ENCODE measurements at regions of chr17 and their contacts with region 1.

Region 1: GRCh38 chr17:30716461-30717300 is 107.8 kb downstream of the CRLF3 start:
- DNase-seq: peak in 1 of 5 donors; percentile 27
- H3K4me3 ChIP-seq: no peak overlapping the region
- H3K4me3 Mint-ChIP-seq: no peak overlapping the region
- H3K27ac ChIP-seq: no peak overlapping the region
- H3K27ac Mint-ChIP-seq: peak overlapping the region in 1 of 7 donors; percentile 27
- H3K4me1 ChIP-seq: no peaks in the 10 kb centered on the region
- H3K4me1 Mint-ChIP-seq: peaks cover 5 to 11% (median 6%) of the 10 kb centered on the region in 4 donors
- H3K27me3 ChIP-seq: no peaks in the 10 kb centered on the region
- H3K27me3 Mint-ChIP-seq: no peaks in the 10 kb centered on the region

Region 2: DNA sequence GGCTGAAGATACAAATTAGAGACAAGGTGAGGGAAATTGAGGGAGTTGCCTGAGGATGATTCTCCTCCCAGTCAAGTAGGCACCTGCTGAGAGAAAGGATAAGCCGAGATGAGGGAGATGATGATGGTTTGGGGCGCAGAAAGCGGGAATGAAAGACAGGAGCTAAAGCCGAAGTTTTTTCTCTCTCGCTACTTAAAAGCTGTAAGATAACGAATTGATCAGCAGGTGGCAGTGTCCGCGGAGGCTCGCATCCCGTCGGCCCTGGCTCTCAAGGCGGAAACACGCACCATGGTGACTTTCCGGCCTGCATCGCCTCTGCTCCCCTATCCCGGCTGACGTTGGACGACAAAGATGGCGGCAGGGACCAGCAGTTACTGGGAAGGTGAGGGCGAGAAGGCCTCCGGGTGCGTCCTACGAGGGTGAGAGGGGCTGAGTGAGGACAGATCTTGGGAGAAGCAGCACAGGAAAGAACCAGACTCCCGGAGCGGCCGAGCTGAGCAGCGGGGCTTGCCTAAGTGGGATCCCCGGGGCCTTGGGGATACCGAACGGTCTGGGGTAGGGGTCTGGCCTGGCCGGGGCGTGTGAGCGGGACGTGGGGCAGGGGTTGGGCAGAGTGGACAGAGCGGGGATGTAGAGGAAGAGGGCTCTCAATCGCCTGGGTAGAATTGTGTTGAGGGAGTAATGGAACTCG is 239.5 kb before region 1 on chr17 and contains the start of gene GOSR1:
- CTCF ChIA-PET with region 1: no interaction called
- POLR2A ChIA-PET with region 1: no interaction called
- intact Hi-C with region 1: loop called (anchors 2 kb)
- DNase-seq: peak; percentile 87 to 94 (median 90)
- H3K4me3 ChIP-seq: peak within 1 kb of the TSS; percentile 77 to 94
- H3K4me3 Mint-ChIP-seq: peak within 1 kb of the TSS; percentile 92 to 99 (median 97)
- H3K27ac ChIP-seq: peak within 1 kb of the TSS; percentile 99
- H3K27ac Mint-ChIP-seq: peak within 1 kb of the TSS; percentile 94 to 100 (median 98)
- H3K4me1 ChIP-seq: peaks cover 20% of the 10 kb centered on the region
- H3K4me1 Mint-ChIP-seq: peaks cover 20 to 45% (median 37%) of the 10 kb centered on the region in 4 donors
- H3K27me3 ChIP-seq: peaks cover 4% of the 10 kb centered on the region
- H3K27me3 Mint-ChIP-seq: peaks cover 0 to 2% of the 10 kb centered on the region in 2 donors
- total RNA-seq, gene GOSR1: 59.5 to 64.5 TPM

Measured in CD4-positive, alpha-beta memory T cell (primary cell).